ENCODE measurements at regions of chr6 and their contacts with region 1.

Region 1: DNA sequence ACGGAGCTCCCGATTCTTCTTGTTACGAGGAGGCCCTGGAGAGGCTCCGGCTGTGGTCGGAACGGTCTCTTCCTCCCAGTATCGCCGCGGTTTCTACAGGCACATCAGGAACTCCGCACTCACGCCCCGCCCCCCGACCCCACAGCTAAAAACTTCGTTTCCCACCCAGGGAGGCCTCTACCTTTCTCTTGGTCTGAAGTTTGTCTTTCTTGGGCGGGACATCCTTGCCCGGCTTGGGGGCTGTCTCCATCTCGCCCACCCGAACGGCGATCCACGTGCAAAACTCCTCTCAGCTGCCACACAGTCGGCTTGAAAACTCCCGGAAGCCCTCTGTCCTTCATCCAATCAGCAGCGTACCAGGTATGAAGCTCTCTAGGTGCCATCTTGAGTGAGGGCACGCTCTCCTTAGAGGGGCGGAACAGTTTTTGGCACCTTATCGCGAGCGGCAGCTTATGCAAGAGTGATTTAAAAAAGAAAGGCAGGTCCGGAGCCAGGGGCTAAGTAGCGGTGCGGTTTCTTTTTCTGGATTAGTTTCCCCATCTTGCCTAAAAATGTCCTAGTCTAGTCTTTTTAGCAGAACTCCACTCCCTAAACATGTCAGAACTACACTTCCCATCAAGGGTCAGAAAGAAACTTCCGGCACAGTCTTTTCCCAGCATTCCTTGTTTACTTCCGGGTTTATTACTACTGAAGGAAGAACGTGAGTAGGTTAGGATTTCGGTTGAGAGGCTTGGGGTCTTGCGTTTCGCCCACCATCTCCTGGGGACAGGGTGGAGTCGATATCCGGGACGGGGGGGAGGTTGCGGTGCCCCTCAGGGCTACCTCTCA is at the starts of genes PFDN6 and WDR46:
- DNase-seq: peak; percentile 67 to 90 (median 82)
- ATAC-seq: peak; percentile 95 to 96 (median 96)
- H3K4me3 ChIP-seq: peak within 1 kb of the TSS; percentile 82 to 97
- H3K4me3 Mint-ChIP-seq: peak within 1 kb of the TSS; percentile 93 to 96 (median 96)
- H3K27ac ChIP-seq: peak within 1 kb of the TSS; percentile 65
- H3K27ac Mint-ChIP-seq: peak within 1 kb of the TSS; percentile 92 to 96
- H3K4me1 ChIP-seq: peaks cover 13 to 33% of the 10 kb centered on the region in 2 experiments
- H3K4me1 Mint-ChIP-seq: peaks cover 44 to 50% (median 49%) of the 10 kb centered on the region in 3 donors
- H3K27me3 ChIP-seq: no peaks in the 10 kb centered on the region
- H3K27me3 Mint-ChIP-seq: no peaks in the 10 kb centered on the region
- total RNA-seq, gene PFDN6: 16.1 to 51.4 (median 40.5) TPM
- total RNA-seq, gene WDR46: 38.3 to 74.4 (median 60.4) TPM

Region 2: GRCh38 chr6:33213166-33213988 is 75.8 kb before region 1 on chr6:
- CTCF ChIA-PET with region 1: no interaction called
- POLR2A ChIA-PET with region 1: no interaction called
- DNase-seq: peak in 4 of 35 experiments; percentile 16 to 35 (median 28)
- ATAC-seq: peak; percentile 32 to 46 (median 40)
- H3K4me3 ChIP-seq: peak overlapping the region; percentile 36 to 69
- H3K4me3 Mint-ChIP-seq: peak overlapping the region; percentile 67 to 85 (median 76)
- H3K27ac ChIP-seq: no peak overlapping the region
- H3K27ac Mint-ChIP-seq: peak overlapping the region in 1 of 2 donors; percentile 48
- H3K4me1 ChIP-seq: peaks cover 4 to 36% of the 10 kb centered on the region in 2 experiments
- H3K4me1 Mint-ChIP-seq: peaks cover 33 to 41% (median 36%) of the 10 kb centered on the region in 3 donors
- H3K27me3 ChIP-seq: peaks cover 1 to 54% of the 10 kb centered on the region in 2 experiments
- H3K27me3 Mint-ChIP-seq: peaks cover 15 to 44% of the 10 kb centered on the region in 2 donors

Region 3: DNA sequence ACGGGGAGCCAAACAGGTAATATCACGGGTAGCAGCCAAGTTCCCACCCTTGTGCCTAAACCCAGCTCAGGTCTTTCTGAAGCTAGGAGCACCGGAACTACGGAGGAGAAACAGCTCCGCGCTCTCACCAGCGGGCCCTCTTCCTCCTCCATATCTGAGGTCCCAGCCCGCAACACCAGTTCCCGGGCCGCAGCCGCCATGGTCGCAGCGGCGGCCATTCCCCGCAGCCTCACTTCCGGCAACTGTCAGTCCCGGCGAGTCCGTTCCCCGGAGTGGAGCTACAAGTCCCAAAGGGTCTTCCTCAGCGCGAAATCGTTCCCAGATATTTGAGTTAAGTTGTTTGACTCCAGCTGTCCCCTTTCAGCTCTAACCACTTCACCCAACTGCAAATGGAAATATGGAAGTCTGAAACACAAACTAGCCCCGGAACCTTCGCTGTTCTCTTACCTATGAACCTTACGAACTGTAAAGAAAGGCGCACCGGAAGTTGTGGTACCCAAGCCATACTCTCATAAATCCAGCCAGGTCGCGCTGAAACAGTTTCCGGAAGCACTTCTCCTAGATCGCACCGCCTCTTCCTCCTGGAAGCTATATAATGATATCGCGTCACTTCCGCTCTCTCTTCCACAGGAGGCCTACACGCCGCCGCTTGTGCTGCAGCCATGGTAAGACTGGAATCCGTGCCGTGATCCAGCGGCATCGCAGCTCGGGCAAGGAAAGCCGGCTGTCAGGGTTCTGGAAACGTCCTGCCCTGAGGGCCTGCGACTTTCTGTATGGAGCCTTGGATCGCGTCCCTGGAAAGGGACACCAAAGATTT is 17.5 kb before region 1 on chr6 and contains the starts of genes RPS18 and VPS52:
- CTCF ChIA-PET with region 1: interaction called, 3 to 11 read pairs
- POLR2A ChIA-PET with region 1: interaction called, 8 to 10 read pairs
- DNase-seq: peak; percentile 79 to 99 (median 92)
- ATAC-seq: peak; percentile 82 to 93 (median 90)
- H3K4me3 ChIP-seq: peak within 1 kb of the TSS; percentile 70 to 73
- H3K4me3 Mint-ChIP-seq: peak within 1 kb of the TSS; percentile 92 to 98 (median 94)
- H3K27ac ChIP-seq: peak within 1 kb of the TSS; percentile 85
- H3K27ac Mint-ChIP-seq: peak within 1 kb of the TSS; percentile 98 to 99
- H3K4me1 ChIP-seq: peaks cover 37 to 59% of the 10 kb centered on the region in 2 experiments
- H3K4me1 Mint-ChIP-seq: peaks cover 55 to 68% (median 60%) of the 10 kb centered on the region in 3 donors
- H3K27me3 ChIP-seq: no peaks in the 10 kb centered on the region
- H3K27me3 Mint-ChIP-seq: no peaks in the 10 kb centered on the region
- total RNA-seq, gene RPS18: 3,249 to 4,871 (median 4,590) TPM
- total RNA-seq, gene VPS52: 81.4 to 100 (median 87.6) TPM

Region 4: DNA sequence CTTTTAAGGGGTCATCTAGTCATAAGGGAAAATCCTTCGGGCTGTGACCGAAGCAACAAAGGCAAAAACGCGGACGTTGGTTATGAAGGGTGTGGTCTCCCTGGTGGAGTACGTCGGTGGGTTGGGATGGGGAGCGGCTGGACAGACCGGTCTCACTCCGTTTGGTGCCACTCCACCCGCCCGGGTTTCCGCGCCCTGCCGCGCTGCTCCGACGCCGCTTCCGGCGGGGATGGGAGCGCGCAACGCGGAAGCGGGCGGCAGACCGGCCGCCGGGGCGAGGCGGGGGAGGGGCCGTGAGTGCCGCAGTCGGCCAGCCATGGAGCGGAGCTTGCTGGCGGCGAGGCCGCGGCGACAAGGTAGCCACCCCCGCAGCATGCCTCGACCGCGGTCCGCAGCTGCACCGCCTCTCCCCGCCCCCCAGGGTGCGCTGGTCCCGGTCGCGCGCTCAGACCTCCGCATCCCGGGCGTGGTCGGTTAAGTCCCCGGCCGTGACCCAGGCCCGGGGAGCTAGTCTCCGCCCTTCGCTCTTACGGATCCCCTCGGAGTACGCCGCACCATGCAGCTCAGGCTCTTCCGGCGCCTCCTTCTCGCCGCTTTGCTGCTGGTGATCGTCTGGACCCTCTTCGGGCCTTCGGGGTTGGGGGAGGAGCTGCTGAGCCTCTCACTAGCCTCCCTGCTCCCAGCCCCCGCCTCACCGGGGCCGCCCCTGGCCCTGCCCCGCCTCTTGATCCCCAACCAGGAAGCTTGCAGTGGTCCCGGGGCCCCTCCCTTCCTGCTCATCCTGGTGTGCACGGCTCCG is 12.1 kb before region 1 on chr6 and contains the start of gene B3GALT4:
- CTCF ChIA-PET with region 1: interaction called in 1 of 2 experiments, 11 read pairs
- POLR2A ChIA-PET with region 1: interaction called, 8 to 10 read pairs
- DNase-seq: peak in 34 of 35 experiments; percentile 36 to 84 (median 52)
- ATAC-seq: peak; percentile 71 to 76 (median 73)
- H3K4me3 ChIP-seq: peak within 1 kb of the TSS; percentile 60 to 83
- H3K4me3 Mint-ChIP-seq: peak within 1 kb of the TSS; percentile 90 to 94 (median 92)
- H3K27ac ChIP-seq: peak within 1 kb of the TSS; percentile 82
- H3K27ac Mint-ChIP-seq: peak within 1 kb of the TSS; percentile 94 to 96
- H3K4me1 ChIP-seq: peaks cover 35 to 79% of the 10 kb centered on the region in 2 experiments
- H3K4me1 Mint-ChIP-seq: peaks cover 64 to 73% (median 68%) of the 10 kb centered on the region in 3 donors
- H3K27me3 ChIP-seq: no peaks in the 10 kb centered on the region
- H3K27me3 Mint-ChIP-seq: no peaks in the 10 kb centered on the region
- total RNA-seq, gene B3GALT4: 12.2 to 47.2 (median 40.4) TPM

Region 5: GRCh38 chr6:33367009-33367714 is 78.0 kb after region 1 on chr6:
- CTCF ChIA-PET with region 1: no interaction called
- POLR2A ChIA-PET with region 1: no interaction called
- DNase-seq: no peak
- ATAC-seq: no peak
- H3K4me3 ChIP-seq: no peak overlapping the region
- H3K4me3 Mint-ChIP-seq: no peak overlapping the region
- H3K27ac ChIP-seq: no peak overlapping the region
- H3K27ac Mint-ChIP-seq: no peak overlapping the region
- H3K4me1 ChIP-seq: no peaks in the 10 kb centered on the region
- H3K4me1 Mint-ChIP-seq: no peaks in the 10 kb centered on the region
- H3K27me3 ChIP-seq: peaks cover 0 to 2% of the 10 kb centered on the region in 2 experiments
- H3K27me3 Mint-ChIP-seq: no peaks in the 10 kb centered on the region

Region 6: GRCh38 chr6:33410050-33410710 is 121.0 kb after region 1 on chr6:
- CTCF ChIA-PET with region 1: no interaction called
- POLR2A ChIA-PET with region 1: no interaction called
- DNase-seq: peak; percentile 91 to 99 (median 94)
- ATAC-seq: peak; percentile 81 to 85 (median 84)
- H3K4me3 ChIP-seq: peak overlapping the region; percentile 71 to 90
- H3K4me3 Mint-ChIP-seq: peak overlapping the region; percentile 83 to 94 (median 87)
- H3K27ac ChIP-seq: peak overlapping the region; percentile 97
- H3K27ac Mint-ChIP-seq: peak overlapping the region; percentile 88
- H3K4me1 ChIP-seq: peaks cover 4 to 62% of the 10 kb centered on the region in 2 experiments
- H3K4me1 Mint-ChIP-seq: peaks cover 42 to 60% (median 50%) of the 10 kb centered on the region in 3 donors
- H3K27me3 ChIP-seq: no peaks in the 10 kb centered on the region
- H3K27me3 Mint-ChIP-seq: no peaks in the 10 kb centered on the region

Region 7: GRCh38 chr6:33420491-33421343 is 131.6 kb after region 1 on chr6:
- CTCF ChIA-PET with region 1: no interaction called
- POLR2A ChIA-PET with region 1: no interaction called
- DNase-seq: no peak
- ATAC-seq: no peak
- H3K4me3 ChIP-seq: no peak overlapping the region
- H3K4me3 Mint-ChIP-seq: peak overlapping the region in 1 of 3 donors; percentile 94
- H3K27ac ChIP-seq: no peak overlapping the region
- H3K27ac Mint-ChIP-seq: peak overlapping the region; percentile 31 to 58
- H3K4me1 ChIP-seq: peaks cover 29 to 60% of the 10 kb centered on the region in 2 experiments
- H3K4me1 Mint-ChIP-seq: peaks cover 59 to 83% (median 74%) of the 10 kb centered on the region in 3 donors
- H3K27me3 ChIP-seq: no peaks in the 10 kb centered on the region
- H3K27me3 Mint-ChIP-seq: no peaks in the 10 kb centered on the region